ENCODE measurements at regions of chr3 and their contacts with region 1.

Region 1: DNA sequence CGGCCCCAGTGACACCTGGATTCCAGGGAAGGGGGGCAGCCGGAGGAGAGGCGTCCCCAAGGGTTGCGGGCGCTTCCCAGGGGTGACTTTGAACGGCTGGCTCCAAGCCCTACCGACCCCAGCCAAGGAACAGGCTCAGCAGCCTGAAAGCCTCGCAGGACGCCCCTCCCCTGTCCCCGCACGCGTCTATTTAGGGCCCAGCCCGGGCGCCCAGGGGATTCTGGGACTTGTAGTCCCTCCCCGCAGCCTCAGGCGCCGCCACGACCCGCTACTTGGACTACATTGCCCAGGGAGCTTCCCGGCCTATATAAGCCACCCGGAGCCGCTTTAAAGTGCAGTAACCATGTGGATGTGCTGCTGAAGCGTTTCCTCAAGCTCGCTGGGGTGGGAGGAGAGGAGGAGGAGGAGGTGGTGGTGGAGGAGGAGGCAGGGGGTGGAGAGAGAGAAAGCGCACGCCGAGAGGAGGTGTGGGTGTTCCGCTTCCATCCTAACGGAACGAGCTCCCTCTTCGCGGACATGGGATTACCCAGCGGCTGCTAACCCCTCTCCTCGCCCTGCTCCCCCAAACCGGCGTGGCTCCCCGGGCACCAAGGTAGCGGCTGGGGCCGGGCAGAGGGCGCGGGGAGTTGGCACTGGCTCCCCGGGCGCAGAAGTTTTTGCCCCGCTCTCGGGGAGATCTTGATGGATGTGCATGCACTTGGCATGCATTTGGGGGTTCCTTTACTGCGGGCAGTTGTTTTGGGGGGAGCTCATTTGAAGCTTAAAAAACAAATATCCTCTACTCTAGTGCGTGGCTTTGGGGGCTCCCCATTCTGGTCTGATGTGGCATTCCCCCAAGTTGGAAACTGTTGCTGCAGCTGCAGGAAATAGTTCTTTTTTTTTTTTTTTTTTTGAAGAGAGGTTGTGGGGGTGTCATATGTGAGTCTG is at the start of gene ITPR1:
- DNase-seq: peak; percentile 97 to 100
- H3K4me3 ChIP-seq: peak within 1 kb of the TSS; percentile 82 to 84
- H3K27ac ChIP-seq: peak within 1 kb of the TSS; percentile 87 to 93
- H3K4me1 ChIP-seq: peaks cover 0 to 15% of the 10 kb centered on the region in 2 donors
- H3K27me3 ChIP-seq: no peaks in the 10 kb centered on the region
- CTCF ChIP-seq: no peak
- total RNA-seq, gene ITPR1: 121 TPM

Region 2: GRCh38 chr3:4303187-4304123 is 189.8 kb before region 1 on chr3 and contains the start of gene SETMAR:
- intact Hi-C with region 1: loop called (anchors 5 kb)
- DNase-seq: peak; percentile 75 to 97
- H3K4me3 ChIP-seq: peak within 1 kb of the TSS; percentile 90 to 92
- H3K27ac ChIP-seq: peak within 1 kb of the TSS; percentile 91 to 96
- H3K4me1 ChIP-seq: peaks cover 8 to 42% of the 10 kb centered on the region in 2 donors
- H3K27me3 ChIP-seq: no peaks in the 10 kb centered on the region
- CTCF ChIP-seq: no peak
- total RNA-seq, gene SETMAR: 13.6 TPM

Region 3: GRCh38 chr3:4416961-4417360 is 76.3 kb before region 1 on chr3:
- intact Hi-C with region 1: loop called (anchors 2 kb)
- DNase-seq: peak; percentile 82 to 95
- H3K4me3 ChIP-seq: no peak overlapping the region
- H3K27ac ChIP-seq: peak overlapping the region; percentile 79 to 88
- H3K4me1 ChIP-seq: peaks cover 3 to 13% of the 10 kb centered on the region in 2 donors
- H3K27me3 ChIP-seq: no peaks in the 10 kb centered on the region
- CTCF ChIP-seq: peak in 1 of 3 experiments; percentile 5

Region 4: GRCh38 chr3:4474683-4475490 is 18.4 kb before region 1 on chr3:
- intact Hi-C with region 1: loop called (anchors 1 kb)
- DNase-seq: peak; percentile 56 to 86
- H3K4me3 ChIP-seq: peak overlapping the region in 1 of 2 donors; percentile 37
- H3K27ac ChIP-seq: peak overlapping the region; percentile 59 to 69
- H3K4me1 ChIP-seq: peaks cover 0 to 10% of the 10 kb centered on the region in 2 donors
- H3K27me3 ChIP-seq: no peaks in the 10 kb centered on the region
- CTCF ChIP-seq: no peak

Region 5: DNA sequence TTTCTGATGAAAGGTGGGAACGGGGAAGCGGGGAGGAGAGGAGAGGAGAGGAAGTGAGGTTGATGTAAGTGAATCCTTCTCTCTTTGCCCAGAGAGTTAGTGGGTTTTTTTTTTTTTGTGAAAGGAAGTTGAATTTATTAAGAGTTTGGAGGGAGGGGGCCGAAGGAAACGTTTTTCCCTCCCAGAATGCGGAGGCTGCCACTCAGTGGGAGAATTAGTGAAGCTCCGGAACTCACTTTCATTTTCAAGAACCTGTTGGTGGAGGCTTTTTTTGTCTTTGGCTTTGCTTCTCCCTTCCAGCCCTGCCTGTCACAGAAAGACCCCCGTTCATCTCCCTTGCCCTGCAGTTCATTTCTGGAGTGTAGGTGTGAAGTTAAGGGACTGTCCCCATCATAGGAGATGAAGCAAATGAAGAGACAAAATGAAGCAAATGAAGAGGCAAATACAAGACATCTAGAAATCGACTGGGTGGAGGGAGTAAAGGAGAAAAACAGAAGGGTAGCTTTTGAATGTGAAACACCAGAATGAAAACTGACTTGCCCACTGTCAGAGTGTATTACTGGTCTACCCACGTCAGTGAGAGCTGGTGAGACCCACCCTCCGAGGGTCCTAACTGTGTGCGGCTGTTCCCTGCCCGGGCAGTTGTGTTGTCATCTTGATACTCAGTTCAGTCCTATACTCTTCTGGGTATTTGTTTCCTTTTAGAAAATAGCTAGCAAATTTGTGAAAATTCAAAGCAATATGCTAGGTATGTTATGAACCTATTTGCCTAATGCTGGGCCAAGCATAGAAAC is 91.4 kb after region 1 on chr3:
- intact Hi-C with region 1: loop called (anchors 1 kb)
- DNase-seq: no peak
- H3K4me3 ChIP-seq: peak overlapping the region; percentile 43 to 57
- H3K27ac ChIP-seq: peak overlapping the region; percentile 84 to 86
- H3K4me1 ChIP-seq: peaks cover 0 to 41% of the 10 kb centered on the region in 2 donors
- H3K27me3 ChIP-seq: no peaks in the 10 kb centered on the region
- CTCF ChIP-seq: peak in 2 of 3 experiments; percentile 39 to 55

Region 6: GRCh38 chr3:4986782-4987537 is 493.7 kb after region 1 on chr3:
- intact Hi-C with region 1: loop called (anchors 10 kb)
- DNase-seq: peak; percentile 92 to 99
- H3K4me3 ChIP-seq: peak overlapping the region; percentile 46 to 58
- H3K27ac ChIP-seq: peak overlapping the region; percentile 97 to 99
- H3K4me1 ChIP-seq: peaks cover 29 to 52% of the 10 kb centered on the region in 2 donors
- H3K27me3 ChIP-seq: no peaks in the 10 kb centered on the region
- CTCF ChIP-seq: peak in 1 of 3 experiments; percentile 22